Activated B cell treated with CpG ODN at 0.5 μM for 24 hours (primary cell): ENCODE measurements at regions of chr3 and their contacts with region 1.

Region 1: GRCh38 chr3:189967254-189967865 is 153.3 kb downstream of the P3H2 start:
- DNase-seq: no peak
- ATAC-seq: no peak
- H3K4me3 Mint-ChIP-seq: no peak overlapping the region
- H3K27ac Mint-ChIP-seq: no peak overlapping the region
- H3K4me1 Mint-ChIP-seq: no peaks in the 10 kb centered on the region
- H3K27me3 Mint-ChIP-seq: no peaks in the 10 kb centered on the region
- CTCF ChIP-seq: peak; percentile 94

Region 2: DNA sequence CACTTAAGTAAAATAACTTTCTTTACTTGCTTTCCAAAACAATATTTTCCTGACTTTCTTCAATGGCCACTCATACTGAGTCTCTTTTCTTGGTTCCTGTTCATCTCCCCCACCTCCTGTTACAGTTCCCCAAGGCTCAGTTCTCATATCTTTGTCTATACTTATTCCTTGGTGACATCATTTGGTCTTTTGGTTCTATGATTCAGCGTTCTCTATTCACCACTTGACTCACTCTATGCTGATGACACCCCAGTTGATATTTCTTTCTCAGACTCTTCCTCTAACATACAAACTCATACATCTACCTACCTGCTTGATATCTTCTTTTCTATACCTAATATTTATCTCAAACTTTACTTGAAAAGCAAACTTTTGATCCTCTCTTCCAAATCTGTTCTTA is 238.4 kb after region 1 on chr3:
- CTCF ChIA-PET with region 1: no interaction called
- POLR2A ChIA-PET with region 1: no interaction called
- intact Hi-C with region 1: loop called (anchors 1 kb)
- DNase-seq: no peak
- ATAC-seq: no peak
- H3K4me3 Mint-ChIP-seq: no peak overlapping the region
- H3K27ac Mint-ChIP-seq: no peak overlapping the region
- H3K4me1 Mint-ChIP-seq: no peaks in the 10 kb centered on the region
- H3K27me3 Mint-ChIP-seq: no peaks in the 10 kb centered on the region
- CTCF ChIP-seq: no peak

Region 3: GRCh38 chr3:190424478-190425439 is 457.4 kb after region 1 on chr3:
- CTCF ChIA-PET with region 1: interaction called, 6 read pairs
- POLR2A ChIA-PET with region 1: no interaction called
- intact Hi-C with region 1: loop called (anchors 1 kb)
- DNase-seq: no peak
- ATAC-seq: no peak
- H3K4me3 Mint-ChIP-seq: peak overlapping the region; percentile 41
- H3K27ac Mint-ChIP-seq: no peak overlapping the region
- H3K4me1 Mint-ChIP-seq: peaks cover 3% of the 10 kb centered on the region
- H3K27me3 Mint-ChIP-seq: no peaks in the 10 kb centered on the region
- CTCF ChIP-seq: no peak